Calu3 (cell line): ENCODE measurements at regions of chr2 and their contacts with region 1.

Region 1: GRCh38 chr2:10584796-10585475 is 104.8 kb downstream of the NOL10 start:
- DNase-seq: peak; percentile 79
- H3K4me3 Mint-ChIP-seq: peak overlapping the region; percentile 48
- H3K27ac Mint-ChIP-seq: peak overlapping the region; percentile 97
- H3K4me1 Mint-ChIP-seq: peaks cover 39% of the 10 kb centered on the region
- H3K27me3 Mint-ChIP-seq: no peaks in the 10 kb centered on the region
- CTCF ChIP-seq: no peak

Region 2: GRCh38 chr2:10452956-10453904 is 131.7 kb before region 1 on chr2:
- CTCF ChIA-PET with region 1: interaction called, 5 read pairs
- intact Hi-C with region 1: loop called (anchors 1 kb)
- DNase-seq: no peak
- H3K4me3 Mint-ChIP-seq: no peak overlapping the region
- H3K27ac Mint-ChIP-seq: no peak overlapping the region
- H3K4me1 Mint-ChIP-seq: peaks cover 46% of the 10 kb centered on the region
- H3K27me3 Mint-ChIP-seq: peaks cover 19% of the 10 kb centered on the region
- CTCF ChIP-seq: no peak

Region 3: DNA sequence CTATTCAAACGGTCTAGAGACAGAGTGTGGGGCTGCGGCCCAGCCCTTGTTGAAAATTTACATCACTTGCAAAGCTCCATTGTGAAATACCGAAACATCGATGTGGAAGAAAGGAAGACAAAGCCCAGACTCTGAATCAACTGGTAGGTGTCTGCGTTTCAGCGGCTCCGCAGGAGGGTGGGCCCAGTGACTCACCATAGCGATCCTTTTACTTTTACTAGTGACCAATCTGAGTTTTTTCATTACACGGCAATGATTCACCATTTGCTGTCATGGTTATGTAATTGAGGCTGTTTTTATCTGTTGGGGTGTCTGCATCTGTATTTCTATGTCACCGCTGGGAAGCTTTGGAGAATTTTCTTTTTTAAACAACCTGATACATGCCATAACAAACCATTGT is 70.2 kb before region 1 on chr2:
- CTCF ChIA-PET with region 1: no interaction called
- intact Hi-C with region 1: loop called (anchors 2 kb)
- DNase-seq: peak; percentile 74
- H3K4me3 Mint-ChIP-seq: no peak overlapping the region
- H3K27ac Mint-ChIP-seq: peak overlapping the region; percentile 31
- H3K4me1 Mint-ChIP-seq: peaks cover 12% of the 10 kb centered on the region
- H3K27me3 Mint-ChIP-seq: no peaks in the 10 kb centered on the region
- CTCF ChIP-seq: no peak

Region 4: DNA sequence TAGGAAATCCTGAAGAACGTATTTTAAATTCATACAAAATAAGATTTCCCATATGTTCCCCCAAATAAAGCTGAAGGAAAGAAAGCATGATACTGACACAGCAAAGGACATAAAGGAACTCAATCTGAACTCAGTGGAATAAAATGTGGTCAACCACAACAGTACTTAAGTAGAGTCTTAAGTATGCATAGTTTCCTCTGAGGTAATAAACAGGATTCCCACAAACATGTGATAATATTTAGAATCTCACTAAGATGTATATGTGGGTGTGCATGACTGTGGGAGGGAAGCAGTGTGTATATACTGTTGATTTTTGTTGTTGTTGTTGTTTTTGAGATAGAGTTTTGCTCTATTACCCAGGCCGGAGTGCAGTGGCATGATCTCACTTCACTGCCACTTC is 35.5 kb after region 1 on chr2:
- CTCF ChIA-PET with region 1: no interaction called
- intact Hi-C with region 1: no loop called
- DNase-seq: no peak
- H3K4me3 Mint-ChIP-seq: no peak overlapping the region
- H3K27ac Mint-ChIP-seq: no peak overlapping the region
- H3K4me1 Mint-ChIP-seq: no peaks in the 10 kb centered on the region
- H3K27me3 Mint-ChIP-seq: no peaks in the 10 kb centered on the region
- CTCF ChIP-seq: no peak

Region 5: GRCh38 chr2:10659898-10660568 is 75.1 kb after region 1 on chr2:
- CTCF ChIA-PET with region 1: no interaction called
- intact Hi-C with region 1: loop called (anchors 5 kb)
- DNase-seq: peak; percentile 64
- H3K4me3 Mint-ChIP-seq: no peak overlapping the region
- H3K27ac Mint-ChIP-seq: no peak overlapping the region
- H3K4me1 Mint-ChIP-seq: peaks cover 8% of the 10 kb centered on the region
- H3K27me3 Mint-ChIP-seq: no peaks in the 10 kb centered on the region
- CTCF ChIP-seq: peak; percentile 78